Heart left ventricle (tissue), 16 donors: ENCODE measurements at regions of chr11 and their contacts with region 1.

Region 1: DNA sequence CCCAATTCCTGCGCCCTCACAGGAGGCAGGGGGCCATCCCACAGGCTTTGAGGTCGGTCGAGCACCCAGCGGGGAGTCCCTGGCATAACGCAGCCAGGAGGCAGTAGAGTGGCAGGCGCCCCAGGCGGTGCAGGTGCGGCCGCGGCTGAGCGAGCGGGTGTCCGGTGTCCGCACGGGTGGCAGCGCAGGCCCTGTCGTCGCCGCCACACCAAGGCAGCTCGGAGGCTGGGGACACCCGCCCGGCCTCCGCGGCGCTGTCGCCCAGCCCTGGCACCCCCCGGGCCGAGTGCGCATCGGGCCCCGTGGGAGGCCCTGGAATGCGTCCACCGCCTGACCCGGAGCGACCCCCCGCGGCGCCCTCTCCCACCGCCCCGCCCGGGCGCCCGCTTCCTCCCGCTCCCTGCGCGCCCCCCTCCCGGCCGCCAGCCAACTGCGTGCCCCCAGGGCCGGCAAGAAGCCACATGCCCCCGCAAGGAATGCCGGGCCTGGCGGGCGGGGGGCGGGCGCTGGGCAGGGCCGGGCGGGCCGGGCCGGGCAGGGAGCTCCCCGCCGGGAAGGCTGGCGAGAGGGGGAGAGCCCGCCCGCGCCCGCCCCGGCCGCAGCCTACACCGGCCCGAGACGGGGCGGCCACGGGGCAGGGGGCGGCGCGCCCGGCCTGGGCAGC is 33.9 kb downstream of the PRDM11 start:
- DNase-seq: peak; percentile 58 to 77 (median 71)
- ATAC-seq: peak; percentile 36 to 83 (median 73)
- H3K4me3 ChIP-seq: peak overlapping the region; percentile 34 to 83 (median 64)
- H3K27ac ChIP-seq: peak overlapping the region; percentile 62 to 95 (median 88)
- H3K4me1 ChIP-seq: peaks cover 0 to 48% (median 24%) of the 10 kb centered on the region in 12 donors
- H3K27me3 ChIP-seq: peaks cover 0 to 12% (median 0%) of the 10 kb centered on the region in 9 donors
- CTCF ChIP-seq: peak in 10 of 12 donors; percentile 21 to 60 (median 46)
- POLR2A ChIP-seq: no peak

Region 2: DNA sequence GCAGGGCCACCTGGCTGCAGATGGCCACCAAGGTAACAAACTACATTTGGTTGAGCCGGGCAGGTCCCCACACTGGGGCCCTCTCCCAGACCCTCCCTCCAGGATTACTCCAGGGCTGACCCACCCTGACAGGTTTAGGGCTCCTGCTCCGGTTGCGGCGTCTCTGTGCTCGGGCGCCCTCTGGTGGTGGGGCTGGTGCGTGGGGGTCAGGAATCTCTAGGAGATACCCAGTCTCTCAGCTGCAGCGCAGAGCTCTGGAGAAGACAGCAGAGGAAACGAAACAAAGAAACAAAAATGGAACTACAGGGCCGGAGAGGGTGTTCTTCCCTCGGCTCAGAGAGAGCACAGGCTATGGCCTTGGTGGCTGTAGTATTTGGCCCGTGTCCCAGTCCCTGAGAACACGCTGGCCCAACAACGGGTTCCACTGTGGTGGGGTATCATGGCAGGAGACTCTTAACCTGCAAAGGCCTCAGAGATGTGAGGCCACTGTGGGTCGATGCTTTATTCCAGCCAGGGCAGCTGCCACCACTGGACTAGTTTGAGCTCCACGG is 1235.5 kb before region 1 on chr11:
- intact Hi-C with region 1: no loop called
- DNase-seq: peak; percentile 71 to 90 (median 75)
- ATAC-seq: peak; percentile 25 to 69 (median 31)
- H3K4me3 ChIP-seq: peak overlapping the region; percentile 62 to 90 (median 70)
- H3K27ac ChIP-seq: peak overlapping the region; percentile 85 to 92 (median 90)
- H3K4me1 ChIP-seq: peaks cover 0 to 41% (median 18%) of the 10 kb centered on the region in 12 donors
- H3K27me3 ChIP-seq: peaks cover 0 to 33% (median 0%) of the 10 kb centered on the region in 9 donors
- CTCF ChIP-seq: peak; percentile 71 to 88 (median 82)
- POLR2A ChIP-seq: no peak

Region 3: GRCh38 chr11:44814881-44815592 is 365.3 kb before region 1 on chr11:
- intact Hi-C with region 1: no loop called
- DNase-seq: no peak
- ATAC-seq: peak in 1 of 4 donors; percentile 15
- H3K4me3 ChIP-seq: no peak overlapping the region
- H3K27ac ChIP-seq: peak overlapping the region in 7 of 12 donors; percentile 10 to 47 (median 36)
- H3K4me1 ChIP-seq: peaks cover 6 to 96% (median 74%) of the 10 kb centered on the region in 12 donors
- H3K27me3 ChIP-seq: no peaks in the 10 kb centered on the region
- CTCF ChIP-seq: no peak
- POLR2A ChIP-seq: no peak

Region 4: DNA sequence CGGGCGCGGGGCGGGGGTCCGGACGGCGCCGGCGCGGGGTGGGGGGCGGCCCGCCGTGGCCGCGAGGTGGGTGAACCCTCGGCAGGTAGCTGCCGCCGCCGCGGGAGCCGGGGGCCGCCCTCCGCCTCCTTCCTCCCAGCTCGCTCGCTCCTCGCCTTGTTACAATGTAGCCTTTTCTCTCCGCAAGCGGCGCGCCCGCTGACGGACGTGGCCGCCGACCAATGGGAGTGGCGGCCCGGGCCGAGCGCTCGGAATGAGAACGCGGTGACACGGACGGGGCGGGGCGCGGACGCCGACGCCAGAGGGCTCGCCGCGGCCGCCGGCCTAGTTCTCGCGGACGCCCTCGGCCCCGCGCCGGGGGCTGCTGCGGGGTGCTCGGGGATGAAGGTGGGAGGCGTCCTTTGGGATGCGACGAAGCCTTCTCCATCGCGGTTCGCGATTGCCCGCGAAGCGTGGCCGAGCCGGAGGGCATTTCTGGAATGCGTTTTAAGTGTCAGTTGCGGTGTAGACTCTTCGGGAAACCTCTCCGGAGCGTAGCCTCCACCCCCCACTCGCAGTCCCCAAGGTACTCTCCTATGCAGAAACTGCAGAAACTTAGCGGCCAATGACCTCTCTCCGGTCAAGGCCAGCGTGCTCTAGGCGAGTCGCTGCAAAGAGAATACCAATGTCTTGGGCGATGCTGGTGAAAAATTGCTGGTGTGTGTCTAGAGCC is 33.1 kb before region 1 on chr11:
- intact Hi-C with region 1: loop called in 7 of 10 experiments (anchors 2 to 5 kb)
- DNase-seq: peak; percentile 95 to 98 (median 97)
- ATAC-seq: peak; percentile 91 to 98 (median 98)
- H3K4me3 ChIP-seq: peak overlapping the region; percentile 58 to 93 (median 78)
- H3K27ac ChIP-seq: peak overlapping the region; percentile 77 to 99 (median 98)
- H3K4me1 ChIP-seq: peaks cover 0 to 31% (median 20%) of the 10 kb centered on the region in 12 donors
- H3K27me3 ChIP-seq: peaks cover 0 to 6% (median 0%) of the 10 kb centered on the region in 9 donors
- CTCF ChIP-seq: peak in 4 of 12 donors; percentile 17 to 38 (median 24)
- POLR2A ChIP-seq: peak; percentile 65 to 95

Region 5: GRCh38 chr11:45209891-45210699 is 29.8 kb after region 1 on chr11:
- intact Hi-C with region 1: loop called in 2 of 10 experiments (anchors 2 kb)
- DNase-seq: peak; percentile 79 to 96 (median 91)
- ATAC-seq: peak; percentile 94 to 97 (median 96)
- H3K4me3 ChIP-seq: peak overlapping the region in 8 of 12 donors; percentile 5 to 40 (median 19)
- H3K27ac ChIP-seq: peak overlapping the region; percentile 64 to 94 (median 82)
- H3K4me1 ChIP-seq: peaks cover 14 to 75% (median 28%) of the 10 kb centered on the region in 12 donors
- H3K27me3 ChIP-seq: no peaks in the 10 kb centered on the region
- CTCF ChIP-seq: peak in 3 of 12 donors; percentile 8 to 27 (median 21)
- POLR2A ChIP-seq: peak in 1 of 2 donors; percentile 35

Region 6: DNA sequence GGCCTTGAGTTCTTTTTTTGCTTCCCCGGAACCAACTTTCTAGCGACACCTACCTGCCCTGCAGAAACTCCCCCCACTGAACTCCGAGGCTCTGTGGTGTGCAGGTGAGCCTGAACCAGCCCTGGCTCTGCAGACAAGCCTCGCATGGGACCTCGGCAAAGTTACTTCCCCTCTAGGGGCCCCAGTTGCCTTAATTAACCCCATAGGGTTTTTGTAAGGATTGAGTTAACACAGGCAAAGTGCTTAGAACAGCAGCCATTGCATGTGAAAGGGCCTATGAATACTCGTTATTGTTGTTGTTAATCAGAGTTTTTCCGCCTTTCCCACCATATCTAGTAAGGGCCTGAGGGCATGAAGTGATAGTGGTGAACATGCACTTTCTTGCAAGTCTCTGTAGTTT is 118.4 kb after region 1 on chr11:
- intact Hi-C with region 1: loop called in 1 of 10 experiments (anchors 5 kb)
- DNase-seq: no peak
- ATAC-seq: no peak
- H3K4me3 ChIP-seq: no peak overlapping the region
- H3K27ac ChIP-seq: no peak overlapping the region
- H3K4me1 ChIP-seq: no peaks in the 10 kb centered on the region
- H3K27me3 ChIP-seq: peaks cover 0 to 5% (median 0%) of the 10 kb centered on the region in 9 donors
- CTCF ChIP-seq: no peak
- POLR2A ChIP-seq: no peak